ENCODE measurements at regions of chr9 and their contacts with region 1.

Region 1: GRCh38 chr9:70111042-70111602 is 67.5 kb downstream of the MAMDC2 start:
- DNase-seq: peak; percentile 35 to 66
- ATAC-seq: peak; percentile 50 to 71 (median 65)
- H3K4me3 ChIP-seq: no peak overlapping the region
- H3K4me3 Mint-ChIP-seq: no peak overlapping the region
- H3K27ac ChIP-seq: no peak overlapping the region
- H3K27ac Mint-ChIP-seq: no peak overlapping the region
- H3K4me1 ChIP-seq: peaks cover 3% of the 10 kb centered on the region
- H3K4me1 Mint-ChIP-seq: peaks cover 0 to 8% of the 10 kb centered on the region in 2 donors
- H3K27me3 ChIP-seq: no peaks in the 10 kb centered on the region
- H3K27me3 Mint-ChIP-seq: peaks cover 12 to 14% of the 10 kb centered on the region in 2 donors
- CTCF ChIP-seq: peak; percentile 87

Region 2: DNA sequence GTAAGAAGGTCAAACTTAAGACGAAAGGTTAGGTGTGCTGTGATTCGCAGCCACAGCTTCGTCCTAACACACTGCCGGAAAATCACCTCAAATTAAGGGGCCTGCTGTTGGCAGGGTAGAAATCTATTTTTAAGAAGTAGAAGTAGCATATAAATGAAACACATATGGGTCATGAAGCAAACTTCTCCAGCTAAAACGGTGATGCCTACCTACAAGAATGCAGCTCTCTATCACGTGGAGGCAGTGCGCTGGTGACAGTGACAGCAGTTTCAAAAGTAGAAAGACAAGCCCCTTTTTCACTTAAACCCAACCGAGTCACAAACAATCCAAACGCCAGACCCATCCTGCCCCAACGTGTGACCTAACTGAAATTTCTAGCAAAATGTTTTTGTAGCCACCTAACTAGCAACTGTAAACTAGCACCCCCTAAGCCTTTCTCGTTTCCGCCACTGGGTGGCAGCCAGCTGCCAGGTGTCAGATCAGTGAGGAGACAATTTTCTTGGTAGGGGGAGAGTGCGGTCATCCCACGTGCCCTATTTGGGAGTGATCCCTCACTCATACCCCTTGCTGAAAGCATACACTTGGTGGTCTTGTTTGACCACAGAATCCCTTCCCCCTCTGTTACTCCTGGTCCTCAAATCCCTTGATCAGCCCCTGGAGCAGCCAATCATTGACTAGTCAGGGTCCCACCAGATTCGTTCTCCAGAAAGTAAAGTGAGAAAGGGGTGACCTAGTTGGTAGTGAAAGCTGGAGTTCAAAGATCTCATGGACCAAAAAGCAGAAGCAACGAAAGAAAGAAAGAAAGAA is 139.3 kb before region 1 on chr9:
- intact Hi-C with region 1: loop called (anchors 1 kb)
- DNase-seq: peak; percentile 30 to 53
- ATAC-seq: peak in 2 of 3 donors; percentile 47 to 55
- H3K4me3 ChIP-seq: no peak overlapping the region
- H3K4me3 Mint-ChIP-seq: no peak overlapping the region
- H3K27ac ChIP-seq: no peak overlapping the region
- H3K27ac Mint-ChIP-seq: no peak overlapping the region
- H3K4me1 ChIP-seq: no peaks in the 10 kb centered on the region
- H3K4me1 Mint-ChIP-seq: no peaks in the 10 kb centered on the region
- H3K27me3 ChIP-seq: no peaks in the 10 kb centered on the region
- H3K27me3 Mint-ChIP-seq: peaks cover 0 to 13% of the 10 kb centered on the region in 2 donors
- CTCF ChIP-seq: peak; percentile 46

Measured in natural killer cell (primary cell).